ENCODE measurements at regions of chr20 and their contacts with region 1.

Region 1: DNA sequence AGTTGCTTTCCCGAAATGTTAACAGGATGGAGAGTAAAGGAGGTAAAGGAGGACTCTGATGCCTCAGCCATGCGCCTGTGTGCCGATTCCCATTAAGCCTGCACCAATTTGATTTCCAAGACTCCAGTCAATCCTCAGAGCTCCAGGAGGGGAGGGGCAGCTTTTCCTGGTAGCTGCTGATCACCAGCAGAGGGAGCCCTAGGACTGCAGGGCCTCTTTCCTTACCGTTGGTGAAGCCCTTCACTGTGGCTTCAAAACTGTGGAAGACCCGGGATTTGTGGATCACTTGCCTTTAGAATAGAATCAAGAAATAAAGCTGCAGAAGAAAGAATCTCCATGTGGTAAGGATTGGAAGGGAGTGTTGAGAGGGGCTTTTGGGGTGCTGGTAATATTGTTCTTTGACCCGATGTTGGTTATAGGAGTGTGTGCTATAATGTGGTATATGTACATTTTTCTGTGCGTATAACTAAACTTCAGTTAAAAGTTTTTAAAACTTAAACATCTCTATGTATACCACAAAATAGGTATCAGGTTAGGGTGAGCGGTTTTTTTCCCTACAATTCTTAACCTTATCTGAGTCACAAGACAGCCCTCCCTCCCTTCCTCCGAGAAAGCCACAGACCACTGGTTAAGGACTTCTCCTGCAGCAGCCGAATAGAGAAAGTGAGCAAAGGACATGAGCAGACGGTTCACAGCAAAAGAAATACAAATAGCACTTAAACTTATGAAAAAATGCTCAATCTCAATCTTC is 6.9 kb upstream of the OSER1 start:
- DNase-seq: peak; percentile 91
- ATAC-seq: peak; percentile 73
- H3K4me3 ChIP-seq: no peak overlapping the region
- H3K27ac ChIP-seq: no peak overlapping the region
- H3K4me1 ChIP-seq: peaks cover 14% of the 10 kb centered on the region; the same call in 1 of the 2 replicates
- H3K27me3 ChIP-seq: no peaks in the 10 kb centered on the region
- CTCF ChIP-seq: peak; percentile 99

Region 2: GRCh38 chr20:44355498-44356352 is 138.2 kb after region 1 on chr20 and contains the start of gene HNF4A:
- CTCF ChIA-PET with region 1: no interaction called
- POLR2A ChIA-PET with region 1: no interaction called
- intact Hi-C with region 1: no loop called
- DNase-seq: no peak
- ATAC-seq: no peak
- H3K4me3 ChIP-seq: no peak within 1 kb of the TSS
- H3K27ac ChIP-seq: no peak within 1 kb of the TSS
- H3K4me1 ChIP-seq: no peaks in the 10 kb centered on the region
- H3K27me3 ChIP-seq: peaks cover 32% of the 10 kb centered on the region
- CTCF ChIP-seq: no peak
- total RNA-seq, gene HNF4A: not detected in 2 replicates

Region 3: GRCh38 chr20:44475694-44476560 is 258.4 kb after region 1 on chr20 and contains the start of gene TTPAL:
- CTCF ChIA-PET with region 1: interaction called, 4 read pairs
- POLR2A ChIA-PET with region 1: no interaction called
- intact Hi-C with region 1: loop called (anchors 1 kb)
- DNase-seq: peak; percentile 97
- ATAC-seq: peak; percentile 92
- H3K4me3 ChIP-seq: peak within 1 kb of the TSS; percentile 77
- H3K27ac ChIP-seq: peak within 1 kb of the TSS; percentile 48
- H3K4me1 ChIP-seq: peaks cover 20% of the 10 kb centered on the region
- H3K27me3 ChIP-seq: no peaks in the 10 kb centered on the region
- CTCF ChIP-seq: peak; percentile 41; the same call in 1 of the 2 replicates
- total RNA-seq, gene TTPAL: 14.0 and 17.9 TPM in 2 replicates